ENCODE measurements at regions of chr12 and their contacts with region 1.

Region 1: GRCh38 chr12:121793838-121794533 is 498 bp upstream of the RHOF start:
- DNase-seq: peak; percentile 84

Region 2: DNA sequence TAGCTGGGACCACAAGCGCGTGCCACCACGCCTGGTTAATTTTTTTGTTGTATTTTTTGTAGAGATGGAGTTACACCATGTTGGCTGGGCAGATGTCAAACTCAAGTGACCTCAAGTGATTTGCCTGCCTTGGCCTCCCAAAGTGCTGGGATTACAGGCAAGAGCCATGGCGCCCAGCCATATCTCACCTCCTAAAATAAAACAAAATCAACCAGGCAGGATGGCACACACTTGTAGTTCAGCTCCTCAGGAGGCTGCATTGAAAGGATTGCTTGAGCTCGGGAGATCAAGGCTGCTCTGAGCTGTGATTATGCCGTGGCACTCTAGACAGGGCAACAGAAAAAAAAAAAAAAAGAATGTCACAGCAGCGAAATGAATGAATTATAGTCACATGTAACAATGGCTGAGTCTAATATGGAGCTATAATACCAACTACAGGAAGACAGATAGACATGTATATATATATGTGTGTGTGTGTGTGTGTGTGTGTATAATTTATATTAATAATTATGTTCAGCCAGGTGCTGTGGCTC is 100.8 kb before region 1 on chr12:
- CTCF ChIA-PET with region 1: interaction called, 20 read pairs
- POLR2A ChIA-PET with region 1: interaction called, 3 read pairs
- DNase-seq: no peak

Region 3: DNA sequence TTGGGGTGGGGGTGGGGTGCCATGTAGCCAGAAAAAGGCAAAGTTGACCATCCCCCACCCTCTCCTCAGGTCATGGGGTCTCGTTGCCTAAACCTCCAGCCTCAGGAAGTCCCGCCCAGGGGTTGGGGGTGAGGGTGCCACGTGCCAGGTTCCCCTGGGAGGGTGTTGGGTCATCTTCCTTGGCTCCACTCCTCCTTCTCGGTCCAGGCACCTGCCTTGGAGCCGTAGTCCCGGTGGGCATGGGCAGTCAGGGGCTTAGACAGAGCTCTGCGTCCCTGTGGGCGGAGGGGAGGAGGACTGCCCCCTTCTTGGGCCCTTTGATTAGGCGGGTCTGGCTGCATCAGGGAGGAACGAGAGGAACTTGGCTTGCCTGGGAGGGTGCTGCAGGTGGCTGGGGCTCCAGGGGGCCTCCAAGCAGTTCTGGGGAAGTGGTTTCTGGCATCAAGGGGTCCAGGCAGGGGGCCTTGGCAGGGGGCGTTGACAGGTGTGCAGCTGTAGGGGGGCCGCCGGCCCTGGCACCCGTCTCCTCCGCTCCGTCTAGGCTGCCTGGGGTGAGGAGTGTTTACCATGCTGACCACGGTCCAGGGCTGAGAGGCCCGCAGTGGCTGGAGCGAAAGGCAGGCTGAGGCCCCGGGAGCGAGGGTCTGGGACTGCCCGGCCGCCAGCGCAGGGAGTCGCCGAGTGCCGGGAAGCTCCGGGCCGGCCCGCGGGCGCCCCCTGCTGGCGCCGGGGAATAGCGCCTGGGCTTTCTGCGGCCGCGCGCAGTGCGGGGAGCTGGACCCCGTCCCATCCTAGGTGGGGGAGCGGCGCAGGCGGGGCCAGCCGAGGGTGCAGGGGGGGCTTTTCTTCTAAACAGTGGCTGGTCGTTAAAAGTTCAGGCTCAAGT is 17.7 kb after region 1 on chr12:
- CTCF ChIA-PET with region 1: interaction called, 125 read pairs
- POLR2A ChIA-PET with region 1: interaction called, 125 read pairs
- DNase-seq: peak; percentile 94

Region 4: DNA sequence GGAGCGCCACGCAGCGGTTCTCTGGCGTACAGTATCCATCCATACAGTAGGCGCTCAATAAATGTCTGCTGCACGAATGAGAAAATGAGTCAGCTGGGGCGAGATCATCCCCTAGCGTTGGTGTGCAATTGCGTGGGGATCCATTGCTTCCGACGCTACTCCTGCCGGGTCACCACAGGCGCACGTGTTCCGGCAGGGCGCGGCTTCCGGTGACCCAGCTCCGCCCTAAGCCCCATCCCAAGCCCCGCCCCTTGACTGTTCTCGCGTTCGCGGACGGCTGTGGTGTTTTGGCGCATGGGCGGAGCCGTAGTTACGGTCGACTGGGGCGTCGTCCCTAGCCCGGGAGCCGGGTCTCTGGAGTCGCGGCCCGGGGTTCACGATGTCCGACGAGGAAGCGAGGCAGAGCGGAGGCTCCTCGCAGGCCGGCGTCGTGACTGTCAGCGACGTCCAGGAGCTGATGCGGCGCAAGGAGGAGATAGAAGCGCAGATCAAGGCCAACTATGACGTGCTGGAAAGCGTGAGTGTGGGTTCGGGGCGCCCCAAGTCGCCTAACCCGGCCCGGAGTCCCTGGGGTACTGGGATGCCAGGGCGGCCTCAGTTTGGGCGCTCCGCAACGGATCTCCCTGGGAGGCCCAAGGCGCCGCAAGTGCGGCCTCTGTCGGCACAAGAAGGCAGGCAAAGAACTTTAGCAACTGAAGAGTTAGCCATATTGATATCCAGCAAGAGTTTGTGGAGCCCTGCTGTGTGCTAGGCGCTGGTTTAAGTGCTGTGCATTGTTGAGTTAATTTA is 94.7 kb after region 1 on chr12 and contains the start of gene PSMD9:
- CTCF ChIA-PET with region 1: interaction called, 28 read pairs
- POLR2A ChIA-PET with region 1: interaction called, 18 read pairs
- DNase-seq: peak; percentile 97

Measured in HEK293T (cell line).